Heart left ventricle (tissue), 16 donors: ENCODE measurements at regions of chr2 and their contacts with region 1.

Region 1: DNA sequence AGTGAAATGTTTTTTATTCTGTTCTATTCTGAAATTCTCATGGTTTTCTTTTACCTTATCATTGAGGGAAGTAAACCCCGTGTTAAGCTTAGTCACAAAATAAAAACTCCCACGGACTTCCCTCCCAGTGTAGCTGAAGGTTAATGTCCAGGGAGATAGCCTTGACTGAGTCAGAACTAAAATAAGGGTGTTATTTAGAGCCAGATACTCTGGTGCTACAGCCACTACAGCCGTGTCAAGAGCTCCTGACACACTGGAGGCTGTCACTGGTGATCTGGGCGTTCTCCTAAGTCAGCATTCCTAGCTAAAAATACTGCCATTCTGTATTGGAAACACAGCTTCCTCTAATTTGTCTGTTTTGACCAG is 82.0 kb upstream of the RANBP2 start:
- DNase-seq: peak in 4 of 5 donors; percentile 72 to 79 (median 78)
- ATAC-seq: peak; percentile 92 to 96 (median 94)
- H3K4me3 ChIP-seq: no peak overlapping the region
- H3K27ac ChIP-seq: peak overlapping the region; percentile 67 to 92 (median 84)
- H3K4me1 ChIP-seq: peaks cover 5 to 92% (median 63%) of the 10 kb centered on the region in 12 donors
- H3K27me3 ChIP-seq: no peaks in the 10 kb centered on the region
- CTCF ChIP-seq: no peak
- POLR2A ChIP-seq: no peak

Region 2: GRCh38 chr2:108154371-108155061 is 482.8 kb before region 1 on chr2:
- intact Hi-C with region 1: no loop called
- DNase-seq: no peak
- ATAC-seq: no peak
- H3K4me3 ChIP-seq: no peak overlapping the region
- H3K27ac ChIP-seq: no peak overlapping the region
- H3K4me1 ChIP-seq: no peaks in the 10 kb centered on the region
- H3K27me3 ChIP-seq: no peaks in the 10 kb centered on the region
- CTCF ChIP-seq: no peak
- POLR2A ChIP-seq: no peak

Region 3: DNA sequence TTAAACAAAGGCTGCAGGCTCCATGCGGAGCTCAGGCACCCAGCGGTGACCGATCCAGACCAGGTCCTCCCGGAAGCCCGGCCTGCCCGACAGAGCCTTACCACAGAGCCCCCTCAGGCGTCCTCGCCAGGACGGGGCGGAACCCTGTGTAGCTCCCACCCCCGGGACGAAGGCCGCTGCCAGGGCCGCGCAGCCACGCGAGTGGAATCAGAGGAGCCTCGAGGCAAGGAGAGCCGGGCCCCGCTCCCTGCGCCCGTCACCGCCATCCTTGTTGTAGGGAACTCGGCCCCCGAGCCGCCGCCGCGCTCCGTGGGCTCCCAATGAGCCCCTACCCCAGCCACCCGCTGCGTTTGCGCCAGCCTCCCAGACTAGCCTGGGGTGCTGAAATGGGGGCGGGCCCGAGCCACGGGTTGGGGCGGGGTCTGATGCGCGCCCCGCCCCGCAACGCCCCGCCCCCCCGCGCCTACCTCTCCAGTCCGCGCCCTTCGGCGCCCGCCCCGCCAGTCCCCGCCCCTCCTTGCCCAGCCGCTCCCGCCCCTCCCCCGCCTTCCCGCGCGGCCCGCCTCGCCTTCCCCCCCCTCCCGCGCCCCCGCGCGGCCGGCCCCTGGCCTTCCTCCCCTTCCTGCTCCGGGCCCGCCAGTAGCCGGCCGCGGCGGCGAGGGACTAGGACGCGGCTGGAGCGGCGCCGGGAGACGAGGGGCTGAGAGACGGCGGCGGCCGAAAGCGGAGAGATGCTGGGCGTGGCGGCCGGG is 103.3 kb before region 1 on chr2 and contains the start of gene LIMS1:
- intact Hi-C with region 1: loop called in 1 of 10 experiments (anchors 10 kb)
- DNase-seq: peak; percentile 94 to 96 (median 95)
- ATAC-seq: peak; percentile 88 to 98 (median 98)
- H3K4me3 ChIP-seq: peak within 1 kb of the TSS; percentile 50 to 98 (median 77)
- H3K27ac ChIP-seq: peak within 1 kb of the TSS; percentile 58 to 94 (median 91)
- H3K4me1 ChIP-seq: peaks cover 0 to 31% (median 15%) of the 10 kb centered on the region in 12 donors
- H3K27me3 ChIP-seq: no peaks in the 10 kb centered on the region
- CTCF ChIP-seq: peak in 3 of 12 donors; percentile 14 to 27 (median 23)
- POLR2A ChIP-seq: peak; percentile 34 to 73
- total RNA-seq, gene LIMS1: 65.8 to 136 (median 82.3) TPM

Region 4: GRCh38 chr2:108594132-108594981 is 42.9 kb before region 1 on chr2:
- intact Hi-C with region 1: loop called in 4 of 10 experiments (anchors 2 to 5 kb)
- DNase-seq: no peak
- ATAC-seq: peak; percentile 32 to 76 (median 72)
- H3K4me3 ChIP-seq: peak overlapping the region in 1 of 12 donors; percentile 9
- H3K27ac ChIP-seq: peak overlapping the region in 11 of 12 donors; percentile 4 to 92 (median 66)
- H3K4me1 ChIP-seq: peaks cover 0 to 78% (median 40%) of the 10 kb centered on the region in 12 donors
- H3K27me3 ChIP-seq: no peaks in the 10 kb centered on the region
- CTCF ChIP-seq: no peak
- POLR2A ChIP-seq: no peak

Region 5: DNA sequence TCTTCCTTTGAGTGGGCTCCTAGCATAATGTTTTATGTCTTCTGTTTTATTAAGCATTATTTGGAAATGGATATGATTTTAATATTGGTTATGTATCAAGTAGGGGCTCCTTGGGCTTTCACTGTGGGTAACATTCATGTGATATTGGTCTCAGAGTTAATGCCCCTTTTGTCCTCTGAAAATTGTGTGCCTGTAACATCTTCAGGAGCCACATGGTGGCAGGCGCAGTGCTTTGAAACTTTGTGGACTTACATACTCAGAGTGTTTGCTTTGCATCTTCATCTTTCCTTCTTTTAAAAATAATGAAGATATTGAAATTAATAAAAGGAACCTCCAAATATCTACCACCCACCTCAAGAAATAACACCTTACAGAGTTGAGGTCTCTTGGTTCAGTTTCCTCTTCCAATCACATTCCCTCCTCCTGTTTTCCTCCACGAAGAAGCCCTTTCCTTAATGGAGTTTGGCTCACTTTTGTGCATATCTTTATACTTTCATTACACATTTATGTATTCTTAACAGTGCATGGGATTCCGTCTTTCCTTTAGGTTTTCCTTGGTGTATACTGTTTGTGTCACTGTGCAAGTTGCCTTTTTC is 29.5 kb before region 1 on chr2:
- intact Hi-C with region 1: loop called in 5 of 10 experiments (anchors 1 to 5 kb)
- DNase-seq: peak in 1 of 5 donors; percentile 45
- ATAC-seq: peak in 3 of 4 donors; percentile 47 to 63 (median 61)
- H3K4me3 ChIP-seq: no peak overlapping the region
- H3K27ac ChIP-seq: peak overlapping the region in 8 of 12 donors; percentile 0 to 62 (median 25)
- H3K4me1 ChIP-seq: peaks cover 0 to 30% (median 14%) of the 10 kb centered on the region in 12 donors
- H3K27me3 ChIP-seq: no peaks in the 10 kb centered on the region
- CTCF ChIP-seq: peak; percentile 33 to 70 (median 61)
- POLR2A ChIP-seq: no peak

Region 6: DNA sequence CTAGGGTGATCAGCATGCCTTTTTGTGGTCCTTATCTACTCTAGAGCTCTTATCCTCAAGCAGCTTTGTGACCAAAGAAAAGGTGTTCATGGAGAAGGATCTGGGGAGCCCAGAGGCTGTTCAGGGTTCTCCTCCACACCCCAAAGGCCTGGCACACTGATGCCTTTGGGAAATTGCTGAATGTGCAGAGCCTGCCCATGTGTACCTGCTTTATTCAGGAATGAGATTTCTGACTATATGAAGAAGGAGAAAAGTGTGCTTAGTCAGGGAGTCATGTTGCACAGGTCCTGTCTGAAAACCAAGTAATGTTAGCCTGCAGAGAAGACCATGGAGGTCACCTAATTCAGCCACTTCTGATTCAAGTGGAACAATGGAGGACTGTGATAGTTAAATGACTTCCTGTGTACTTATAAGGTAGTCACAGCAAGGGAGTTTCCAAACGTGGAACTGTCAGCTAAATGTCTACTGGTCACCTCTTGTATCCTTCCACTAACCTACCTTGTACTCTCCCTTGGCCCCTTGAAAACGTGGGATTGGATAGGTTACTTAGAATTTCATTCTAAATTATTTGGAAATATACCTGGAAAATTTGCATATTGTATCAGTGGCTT is 21.7 kb before region 1 on chr2:
- intact Hi-C with region 1: loop called in 1 of 10 experiments (anchors 2 kb)
- DNase-seq: no peak
- ATAC-seq: peak in 3 of 4 donors; percentile 10 to 35 (median 33)
- H3K4me3 ChIP-seq: no peak overlapping the region
- H3K27ac ChIP-seq: no peak overlapping the region
- H3K4me1 ChIP-seq: peaks cover 0 to 87% (median 32%) of the 10 kb centered on the region in 12 donors
- H3K27me3 ChIP-seq: no peaks in the 10 kb centered on the region
- CTCF ChIP-seq: no peak
- POLR2A ChIP-seq: no peak